Ascending aorta (tissue), 2 donors: ENCODE measurements at regions of chr17 and their contacts with region 1.

Region 1: GRCh38 chr17:62065598-62066468 is 755 bp upstream of the MED13 start:
- DNase-seq: peak; percentile 94 to 99
- H3K4me3 ChIP-seq: peak overlapping the region; percentile 65 to 82
- H3K27ac ChIP-seq: peak overlapping the region; percentile 97 to 99
- H3K4me1 ChIP-seq: peaks cover 0 to 20% of the 10 kb centered on the region in 2 donors
- H3K27me3 ChIP-seq: no peaks in the 10 kb centered on the region
- CTCF ChIP-seq: peak; percentile 87 to 89 (median 88)

Region 2: GRCh38 chr17:61251939-61252896 is 813.6 kb before region 1 on chr17:
- intact Hi-C with region 1: loop called (anchors 5 kb)
- DNase-seq: peak; percentile 90 to 99
- H3K4me3 ChIP-seq: no peak overlapping the region
- H3K27ac ChIP-seq: peak overlapping the region; percentile 73 to 91
- H3K4me1 ChIP-seq: peaks cover 6 to 55% of the 10 kb centered on the region in 2 donors
- H3K27me3 ChIP-seq: no peaks in the 10 kb centered on the region
- CTCF ChIP-seq: no peak

Region 3: DNA sequence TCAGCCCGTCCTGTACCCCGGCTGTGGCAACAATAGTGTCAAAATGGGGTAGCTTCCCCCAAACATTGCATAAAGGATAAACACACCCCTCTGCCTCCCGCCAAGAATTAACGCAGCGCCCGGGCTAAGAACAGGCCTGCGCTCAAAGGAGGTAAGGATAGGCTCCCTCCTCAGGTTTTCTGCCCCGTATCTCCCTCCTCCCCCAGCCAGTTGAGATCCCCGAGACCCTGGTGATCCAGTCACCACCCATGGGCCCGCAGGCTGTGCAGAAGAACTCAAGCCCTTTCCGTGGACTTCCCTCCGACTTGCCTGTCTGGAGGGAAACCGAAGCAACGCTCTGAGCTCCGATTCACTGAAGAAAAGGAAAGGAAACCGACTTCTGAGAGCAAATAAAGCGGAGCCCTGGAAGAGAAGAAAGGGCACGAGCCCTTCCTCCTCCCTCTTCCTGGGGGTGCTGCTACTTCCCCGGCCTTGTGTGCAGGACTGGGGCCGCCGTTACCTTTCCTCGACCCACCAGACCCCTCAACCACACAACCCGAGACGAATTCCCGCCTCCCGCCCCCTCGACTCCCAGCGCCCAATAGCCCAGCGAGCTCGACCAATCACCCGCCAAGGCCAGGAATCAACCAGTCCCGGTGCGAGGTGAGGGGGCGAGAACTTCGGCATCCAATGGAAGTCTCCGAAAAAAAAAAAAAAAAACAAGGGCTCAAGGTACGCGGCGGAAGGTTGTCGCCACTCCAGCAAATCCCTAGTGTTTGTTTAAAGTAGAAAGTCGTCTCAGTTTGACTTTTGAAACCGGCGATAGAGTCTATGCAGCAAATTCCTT is 202.6 kb before region 1 on chr17 and contains the start of gene BRIP1:
- intact Hi-C with region 1: loop called (anchors 5 kb)
- DNase-seq: peak; percentile 72 to 95
- H3K4me3 ChIP-seq: peak within 1 kb of the TSS; percentile 47 to 86
- H3K27ac ChIP-seq: peak within 1 kb of the TSS; percentile 72 to 82
- H3K4me1 ChIP-seq: no peaks in the 10 kb centered on the region
- H3K27me3 ChIP-seq: no peaks in the 10 kb centered on the region
- CTCF ChIP-seq: no peak
- total RNA-seq, gene BRIP1: not detected

Region 4: GRCh38 chr17:61875285-61875684 is 190.5 kb before region 1 on chr17:
- intact Hi-C with region 1: no loop called
- DNase-seq: no peak
- H3K4me3 ChIP-seq: no peak overlapping the region
- H3K27ac ChIP-seq: no peak overlapping the region
- H3K4me1 ChIP-seq: no peaks in the 10 kb centered on the region
- H3K27me3 ChIP-seq: no peaks in the 10 kb centered on the region
- CTCF ChIP-seq: no peak

Region 5: DNA sequence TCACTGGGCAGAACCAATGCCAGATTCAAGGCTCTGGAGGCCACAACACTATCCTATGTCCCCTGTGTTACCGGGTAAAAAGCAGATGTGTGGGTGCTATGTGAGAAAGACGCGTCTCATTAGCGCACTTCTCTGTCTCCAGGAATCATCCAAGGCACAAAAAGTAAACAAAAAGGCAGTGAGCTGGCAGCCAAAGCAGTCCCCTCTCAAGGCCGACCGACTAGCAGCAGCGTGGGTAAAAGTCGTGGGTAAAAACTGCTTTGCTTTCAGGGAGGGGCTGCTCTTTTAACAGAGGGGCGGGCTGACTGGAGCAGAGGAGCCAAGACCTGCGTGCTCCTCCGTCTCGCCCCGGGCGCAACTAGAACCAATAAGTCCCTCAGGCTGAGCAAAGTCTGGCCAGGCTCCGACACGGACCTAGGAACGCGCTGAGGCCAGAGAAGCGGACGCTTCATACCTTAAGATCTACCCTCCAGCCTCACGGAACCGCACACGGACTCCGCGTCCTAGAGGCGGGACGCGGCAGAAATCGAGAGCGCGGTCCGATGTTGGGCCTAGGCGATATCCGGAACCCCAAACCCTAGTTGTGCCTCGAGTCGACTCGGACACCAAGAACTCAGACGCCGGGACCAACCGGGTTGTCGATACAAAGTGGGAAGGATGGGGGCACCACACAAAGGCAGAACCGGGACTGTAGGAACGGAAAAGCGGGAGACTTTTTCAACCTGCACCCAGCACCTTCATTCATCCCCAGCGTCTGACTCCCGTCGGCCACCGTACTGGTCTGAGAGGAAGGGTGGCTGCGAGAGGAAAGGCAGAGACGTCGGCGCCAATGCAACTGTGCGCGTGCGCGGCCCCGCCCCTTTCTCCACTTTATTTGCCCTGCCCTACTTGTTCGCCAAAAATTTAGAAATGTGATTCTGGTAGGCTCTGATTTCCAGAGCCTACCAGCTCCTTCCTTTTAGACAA is 138.3 kb before region 1 on chr17 and contains the start of gene INTS2:
- intact Hi-C with region 1: loop called (anchors 1 kb)
- DNase-seq: peak; percentile 82 to 98
- H3K4me3 ChIP-seq: peak within 1 kb of the TSS; percentile 80 to 85
- H3K27ac ChIP-seq: peak within 1 kb of the TSS; percentile 90 to 93
- H3K4me1 ChIP-seq: peaks cover 0 to 9% of the 10 kb centered on the region in 2 donors
- H3K27me3 ChIP-seq: no peaks in the 10 kb centered on the region
- CTCF ChIP-seq: no peak
- total RNA-seq, gene INTS2: 2.2 TPM

Region 6: DNA sequence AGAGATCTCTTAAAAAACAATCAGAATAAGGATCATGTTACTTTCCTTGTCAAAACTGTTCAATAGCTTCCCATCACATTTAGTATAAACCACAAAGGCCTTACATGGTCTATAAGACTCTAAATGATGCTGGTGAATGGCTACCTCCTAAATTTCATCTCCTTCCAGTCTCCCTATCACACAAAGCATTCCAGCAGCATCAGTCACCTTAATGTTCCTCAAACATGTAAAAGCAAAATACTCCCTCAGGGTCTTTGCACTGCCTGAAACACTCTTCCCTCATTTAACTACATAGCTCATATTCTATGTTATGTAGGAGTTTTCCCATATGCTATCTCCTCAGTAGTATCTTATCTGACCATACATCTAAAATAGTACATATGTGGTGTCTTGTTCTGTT is 84.5 kb before region 1 on chr17:
- intact Hi-C with region 1: loop called (anchors 5 kb)
- DNase-seq: no peak
- H3K4me3 ChIP-seq: no peak overlapping the region
- H3K27ac ChIP-seq: peak overlapping the region in 1 of 2 donors; percentile 10
- H3K4me1 ChIP-seq: peaks cover 0 to 3% of the 10 kb centered on the region in 2 donors
- H3K27me3 ChIP-seq: no peaks in the 10 kb centered on the region
- CTCF ChIP-seq: no peak